Right ventricle myocardium inferior (tissue), 1 donor: ENCODE measurements at regions of chr5 and their contacts with region 1.

Region 1: DNA sequence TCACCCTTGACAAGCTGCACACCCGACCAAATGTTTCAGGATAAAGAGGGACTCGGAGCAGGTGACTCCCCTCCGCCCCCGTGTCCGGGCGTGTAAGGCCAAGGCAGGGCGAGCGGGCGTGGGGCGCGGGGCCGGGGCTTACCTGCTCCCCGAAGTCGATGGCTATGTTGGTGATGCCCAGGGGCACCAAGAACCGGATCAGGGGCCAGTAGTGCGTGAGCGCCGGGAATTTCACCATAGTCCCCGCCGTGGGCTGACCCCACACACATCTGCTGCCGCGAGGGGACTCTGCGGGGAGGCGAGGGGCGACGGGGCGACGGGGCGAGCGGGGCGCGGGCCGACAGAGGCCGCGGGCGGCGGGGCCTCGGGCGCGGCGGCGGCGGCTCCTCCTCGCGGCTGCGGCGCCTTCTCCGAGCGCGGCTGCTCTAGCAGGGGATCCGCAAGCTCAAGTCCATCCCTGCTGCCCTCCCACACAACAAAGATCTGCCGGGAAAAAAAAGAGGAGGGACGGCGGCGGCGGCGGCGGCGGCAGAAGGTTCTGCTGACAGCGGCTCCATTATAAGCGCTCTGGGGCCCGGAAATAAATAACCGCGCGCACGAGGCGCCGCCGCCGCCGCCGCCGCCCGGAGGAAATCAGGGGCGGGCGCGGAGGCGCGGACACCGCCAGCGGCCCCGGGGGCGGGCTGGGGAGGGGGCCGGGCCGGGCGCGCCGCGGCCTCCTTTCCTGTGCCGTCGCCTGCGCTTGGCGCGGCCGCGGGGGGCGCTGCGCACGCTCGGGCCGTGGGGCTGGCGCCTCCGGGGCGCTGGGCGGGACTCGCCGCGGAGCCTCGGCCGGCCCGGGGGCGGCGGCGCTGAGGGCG is at the start of gene ANKH:
- DNase-seq: peak; percentile 92
- ATAC-seq: peak; percentile 93
- total RNA-seq, gene ANKH: 156 TPM

Region 2: DNA sequence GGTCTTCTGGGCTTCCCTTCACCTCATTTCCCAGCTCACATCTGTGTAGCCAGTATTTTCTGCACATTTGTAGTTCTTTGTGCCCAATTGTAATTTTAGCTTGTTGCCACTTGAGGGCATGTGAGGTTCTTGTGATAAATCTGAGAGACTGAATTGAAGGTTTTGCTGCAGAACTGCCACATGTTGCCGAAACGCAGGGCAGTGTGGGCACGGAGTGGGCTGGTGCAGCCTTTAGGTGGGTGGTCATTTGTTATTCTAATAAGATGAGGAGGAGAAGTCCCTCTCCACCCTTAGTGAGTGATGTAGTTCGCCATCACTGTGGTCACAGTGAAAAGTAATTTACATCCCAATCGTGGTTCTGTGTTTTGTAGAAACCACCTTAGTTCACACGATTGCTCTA is 185.7 kb before region 1 on chr5:
- intact Hi-C with region 1: loop called (anchors 5 kb)
- DNase-seq: no peak
- ATAC-seq: peak; percentile 38

Region 3: GRCh38 chr5:14727428-14727865 is 144.0 kb before region 1 on chr5:
- intact Hi-C with region 1: loop called (anchors 2 kb)
- DNase-seq: peak; percentile 89
- ATAC-seq: peak; percentile 76

Region 4: DNA sequence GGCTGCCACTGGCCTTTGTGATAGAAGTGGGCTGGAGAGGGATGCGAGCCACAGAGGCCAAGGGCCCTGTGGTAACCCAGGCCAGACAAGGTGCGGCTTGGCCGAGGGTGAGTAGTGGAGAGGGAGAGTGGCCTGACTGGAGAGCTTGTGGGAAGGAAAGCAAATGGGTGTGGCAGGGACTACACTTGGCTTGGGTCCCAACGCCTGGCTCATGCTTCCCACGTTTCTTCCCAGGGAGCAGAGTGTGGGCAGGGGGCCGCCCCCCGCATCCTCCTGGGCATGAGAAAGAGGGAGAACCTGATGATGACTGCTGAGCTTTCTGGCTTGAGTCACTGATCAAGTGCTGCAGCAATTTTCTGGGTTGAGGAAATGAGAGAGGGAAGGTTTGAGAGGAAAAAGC is 95.6 kb before region 1 on chr5:
- intact Hi-C with region 1: no loop called
- DNase-seq: no peak
- ATAC-seq: no peak

Region 5: DNA sequence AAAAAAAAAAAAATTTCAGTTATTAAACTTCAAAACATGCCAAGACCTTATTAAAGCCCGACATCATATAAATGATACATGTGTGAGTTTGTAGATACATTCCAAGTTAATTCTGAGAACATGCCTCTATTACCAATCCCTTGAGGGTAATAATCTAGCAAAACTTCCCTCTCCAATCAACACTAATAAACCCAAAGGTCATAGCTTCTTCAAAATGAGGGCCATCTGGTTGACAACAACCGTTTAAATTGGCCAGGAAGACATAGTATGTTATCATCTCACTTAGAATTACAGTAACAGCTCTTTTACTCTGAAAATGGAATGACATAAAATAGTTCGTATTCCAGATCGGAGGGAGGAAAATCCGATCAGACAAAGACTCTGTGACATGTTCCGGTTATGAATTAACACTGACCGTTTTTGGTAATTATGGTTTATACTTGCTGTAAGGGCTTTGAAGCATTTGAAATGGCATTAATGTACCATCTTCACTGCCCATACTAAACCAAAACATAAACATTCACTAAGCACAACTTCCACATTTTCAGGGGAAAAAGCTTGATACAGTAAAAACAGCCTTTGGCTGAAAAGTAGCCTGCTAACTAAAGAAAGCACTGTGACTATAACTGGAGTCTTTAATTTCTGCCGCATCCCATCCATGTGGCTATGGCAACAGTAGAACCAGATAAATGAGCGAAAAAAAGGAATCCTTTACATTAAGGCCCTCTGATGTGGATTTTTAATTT is 50.2 kb before region 1 on chr5:
- intact Hi-C with region 1: loop called (anchors 5 kb)
- DNase-seq: no peak
- ATAC-seq: peak; percentile 15

Region 6: DNA sequence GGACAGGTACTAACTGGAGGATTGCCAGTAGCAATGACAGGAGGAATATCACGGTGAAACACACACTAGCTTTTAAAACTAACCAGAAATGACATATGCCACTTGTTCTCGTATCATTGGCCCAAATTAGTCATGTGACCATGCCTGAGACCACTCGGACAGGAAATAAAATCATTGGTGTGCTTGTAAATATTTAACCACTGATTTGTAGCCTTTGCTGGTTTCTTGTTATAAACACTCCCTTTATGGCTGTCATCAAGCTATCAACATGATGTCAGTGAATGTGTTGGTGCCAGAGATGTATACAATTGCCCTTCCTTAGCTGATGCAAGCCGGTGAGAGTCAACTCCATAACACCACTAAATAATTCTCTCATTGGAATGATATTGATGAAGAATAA is 123.8 kb after region 1 on chr5:
- intact Hi-C with region 1: no loop called
- DNase-seq: no peak
- ATAC-seq: no peak